ENCODE measurements at regions of chr5 and their contacts with region 1.

Region 1: DNA sequence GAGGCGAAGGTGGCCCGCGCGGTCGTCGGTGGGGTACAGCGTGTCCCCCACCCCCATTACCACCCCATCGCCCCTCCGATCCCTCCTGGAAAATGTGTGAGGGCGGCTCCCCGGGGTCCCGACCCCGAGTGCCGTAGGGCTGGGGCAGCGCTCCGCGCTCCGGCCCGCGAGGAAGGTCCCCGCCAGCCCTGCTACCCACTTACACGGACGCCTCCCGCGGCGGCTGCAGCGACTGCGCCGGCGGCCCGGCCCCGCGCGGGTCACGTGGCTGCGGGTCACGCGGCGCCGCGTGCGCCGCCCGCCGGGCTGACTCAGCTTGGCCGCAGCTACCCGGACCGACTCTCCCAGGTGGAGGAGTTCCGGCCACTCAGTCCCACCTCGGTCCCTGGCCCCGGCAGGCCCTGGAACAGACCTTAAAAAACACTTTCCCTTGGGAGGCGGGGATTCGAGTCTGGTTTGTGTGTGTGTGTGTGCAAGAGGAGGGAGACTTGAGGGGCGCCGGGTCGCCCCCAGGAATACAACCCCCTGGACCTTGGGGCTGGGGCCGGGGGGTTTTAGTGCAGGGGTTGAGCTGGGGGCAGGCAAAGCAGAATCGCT is at the start of gene GNPDA1:
- DNase-seq: peak; percentile 29 to 85 (median 61)
- ATAC-seq: peak; percentile 52
- H3K4me3 ChIP-seq: peak within 1 kb of the TSS; percentile 60 to 78
- H3K4me3 Mint-ChIP-seq: peak within 1 kb of the TSS; percentile 83
- H3K27ac ChIP-seq: peak within 1 kb of the TSS; percentile 55 to 72
- H3K27ac Mint-ChIP-seq: peak within 1 kb of the TSS; percentile 90
- H3K4me1 ChIP-seq: peaks cover 59% of the 10 kb centered on the region
- H3K4me1 Mint-ChIP-seq: peaks cover 72% of the 10 kb centered on the region
- H3K27me3 ChIP-seq: no peaks in the 10 kb centered on the region
- H3K27me3 Mint-ChIP-seq: no peaks in the 10 kb centered on the region
- CTCF ChIP-seq: no peak
- total RNA-seq, gene GNPDA1: 5.2 TPM

Region 2: GRCh38 chr5:141681695-141682641 is 330.9 kb before region 1 on chr5 and contains the start of gene ARAP3:
- CTCF ChIA-PET with region 1: no interaction called
- POLR2A ChIA-PET with region 1: no interaction called
- intact Hi-C with region 1: loop called in 1 of 2 experiments (anchors 1 kb)
- DNase-seq: peak in 7 of 9 experiments; percentile 30 to 78 (median 49)
- ATAC-seq: peak; percentile 54
- H3K4me3 ChIP-seq: peak within 1 kb of the TSS; percentile 55 to 56
- H3K4me3 Mint-ChIP-seq: peak within 1 kb of the TSS; percentile 76
- H3K27ac ChIP-seq: peak within 1 kb of the TSS in 1 of 2 experiments; percentile 34
- H3K27ac Mint-ChIP-seq: peak within 1 kb of the TSS; percentile 49
- H3K4me1 ChIP-seq: peaks cover 30% of the 10 kb centered on the region
- H3K4me1 Mint-ChIP-seq: peaks cover 28% of the 10 kb centered on the region
- H3K27me3 ChIP-seq: no peaks in the 10 kb centered on the region
- H3K27me3 Mint-ChIP-seq: no peaks in the 10 kb centered on the region
- CTCF ChIP-seq: no peak
- total RNA-seq, gene ARAP3: 0.73 to 1.2 TPM

Region 3: DNA sequence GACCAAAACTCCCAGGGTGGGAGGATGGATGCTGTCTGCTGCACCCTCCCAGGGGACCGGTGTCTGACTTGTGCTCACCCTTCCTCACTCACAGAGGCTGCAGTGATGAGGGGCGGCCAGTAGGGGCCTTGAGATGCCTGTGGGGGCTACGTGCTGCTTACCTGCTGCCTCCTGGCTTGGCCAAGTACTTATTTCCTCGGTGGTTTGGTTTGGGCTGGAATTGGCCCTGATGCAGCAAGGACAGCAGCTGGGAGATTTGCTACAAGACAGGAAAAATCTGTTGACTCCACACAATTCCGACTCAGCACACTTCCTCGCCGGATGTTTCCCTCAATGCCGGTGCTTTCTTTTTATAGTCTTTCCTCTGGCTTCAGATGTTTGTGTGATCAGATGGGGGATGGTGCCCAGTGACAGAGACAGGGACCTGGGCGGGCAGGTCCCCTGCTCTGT is 61.5 kb before region 1 on chr5:
- CTCF ChIA-PET with region 1: no interaction called
- POLR2A ChIA-PET with region 1: no interaction called
- intact Hi-C with region 1: no loop called
- DNase-seq: peak in 4 of 9 experiments; percentile 34 to 58 (median 44)
- ATAC-seq: peak; percentile 91
- H3K4me3 ChIP-seq: no peak overlapping the region
- H3K4me3 Mint-ChIP-seq: peak overlapping the region; percentile 54
- H3K27ac ChIP-seq: no peak overlapping the region
- H3K27ac Mint-ChIP-seq: no peak overlapping the region
- H3K4me1 ChIP-seq: no peaks in the 10 kb centered on the region
- H3K4me1 Mint-ChIP-seq: peaks cover 11% of the 10 kb centered on the region
- H3K27me3 ChIP-seq: no peaks in the 10 kb centered on the region
- H3K27me3 Mint-ChIP-seq: no peaks in the 10 kb centered on the region
- CTCF ChIP-seq: peak; percentile 49

Region 4: DNA sequence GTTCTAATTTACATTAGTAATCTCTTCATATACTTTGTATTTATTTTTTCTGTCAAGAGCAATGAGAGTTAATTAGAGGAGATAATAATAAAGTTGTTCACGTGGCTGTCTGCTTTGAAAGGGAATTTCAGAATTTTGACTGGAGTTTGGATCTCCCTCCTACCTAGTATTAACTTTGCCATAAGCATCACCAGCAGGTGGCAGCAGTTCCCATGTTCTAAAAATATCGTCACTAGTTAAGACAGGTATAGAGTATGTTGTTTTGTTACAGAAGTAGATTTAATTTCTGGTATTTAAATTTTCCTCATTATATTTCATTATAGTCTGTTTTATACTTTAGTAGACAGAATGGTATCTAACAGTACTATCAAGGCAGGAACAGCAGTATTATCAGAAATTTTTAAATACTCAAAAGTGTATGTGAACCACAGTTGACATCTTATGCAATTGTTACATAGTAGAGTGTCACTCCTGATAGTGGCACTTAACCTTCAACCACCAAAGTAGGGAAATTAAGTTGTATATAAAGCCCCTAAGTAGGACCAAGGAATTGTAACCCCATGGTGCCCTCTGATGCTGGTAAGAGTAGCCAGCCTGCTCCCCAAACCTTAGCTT is 20.4 kb before region 1 on chr5:
- CTCF ChIA-PET with region 1: interaction called, 24 read pairs
- POLR2A ChIA-PET with region 1: interaction called, 3 read pairs
- intact Hi-C with region 1: loop called in 1 of 2 experiments (anchors 1 kb)
- DNase-seq: peak; percentile 59 to 87 (median 81)
- ATAC-seq: peak; percentile 87
- H3K4me3 ChIP-seq: no peak overlapping the region
- H3K4me3 Mint-ChIP-seq: no peak overlapping the region
- H3K27ac ChIP-seq: no peak overlapping the region
- H3K27ac Mint-ChIP-seq: no peak overlapping the region
- H3K4me1 ChIP-seq: no peaks in the 10 kb centered on the region
- H3K4me1 Mint-ChIP-seq: peaks cover 5% of the 10 kb centered on the region
- H3K27me3 ChIP-seq: no peaks in the 10 kb centered on the region
- H3K27me3 Mint-ChIP-seq: no peaks in the 10 kb centered on the region
- CTCF ChIP-seq: peak; percentile 97

Region 5: GRCh38 chr5:142024771-142025304 is 11.9 kb after region 1 on chr5:
- CTCF ChIA-PET with region 1: interaction called, 18 read pairs
- POLR2A ChIA-PET with region 1: interaction called, 10 read pairs
- intact Hi-C with region 1: loop called in 1 of 2 experiments (anchors 1 kb)
- DNase-seq: peak; percentile 67 to 90 (median 84)
- ATAC-seq: peak; percentile 100
- H3K4me3 ChIP-seq: peak overlapping the region; percentile 43 to 51
- H3K4me3 Mint-ChIP-seq: peak overlapping the region; percentile 90
- H3K27ac ChIP-seq: peak overlapping the region; percentile 67 to 76
- H3K27ac Mint-ChIP-seq: peak overlapping the region; percentile 99
- H3K4me1 ChIP-seq: peaks cover 11% of the 10 kb centered on the region
- H3K4me1 Mint-ChIP-seq: peaks cover 16% of the 10 kb centered on the region
- H3K27me3 ChIP-seq: no peaks in the 10 kb centered on the region
- H3K27me3 Mint-ChIP-seq: no peaks in the 10 kb centered on the region
- CTCF ChIP-seq: no peak

Region 6: GRCh38 chr5:142063878-142064331 is 51.0 kb after region 1 on chr5:
- CTCF ChIA-PET with region 1: interaction called, 6 read pairs
- POLR2A ChIA-PET with region 1: interaction called, 3 read pairs
- intact Hi-C with region 1: loop called in 1 of 2 experiments (anchors 5 kb)
- DNase-seq: peak in 8 of 9 experiments; percentile 11 to 66 (median 40)
- ATAC-seq: peak; percentile 73
- H3K4me3 ChIP-seq: peak overlapping the region in 1 of 2 experiments; percentile 1
- H3K4me3 Mint-ChIP-seq: peak overlapping the region; percentile 49
- H3K27ac ChIP-seq: no peak overlapping the region
- H3K27ac Mint-ChIP-seq: peak overlapping the region; percentile 63
- H3K4me1 ChIP-seq: peaks cover 13% of the 10 kb centered on the region
- H3K4me1 Mint-ChIP-seq: peaks cover 16% of the 10 kb centered on the region
- H3K27me3 ChIP-seq: no peaks in the 10 kb centered on the region
- H3K27me3 Mint-ChIP-seq: no peaks in the 10 kb centered on the region
- CTCF ChIP-seq: no peak

Region 7: DNA sequence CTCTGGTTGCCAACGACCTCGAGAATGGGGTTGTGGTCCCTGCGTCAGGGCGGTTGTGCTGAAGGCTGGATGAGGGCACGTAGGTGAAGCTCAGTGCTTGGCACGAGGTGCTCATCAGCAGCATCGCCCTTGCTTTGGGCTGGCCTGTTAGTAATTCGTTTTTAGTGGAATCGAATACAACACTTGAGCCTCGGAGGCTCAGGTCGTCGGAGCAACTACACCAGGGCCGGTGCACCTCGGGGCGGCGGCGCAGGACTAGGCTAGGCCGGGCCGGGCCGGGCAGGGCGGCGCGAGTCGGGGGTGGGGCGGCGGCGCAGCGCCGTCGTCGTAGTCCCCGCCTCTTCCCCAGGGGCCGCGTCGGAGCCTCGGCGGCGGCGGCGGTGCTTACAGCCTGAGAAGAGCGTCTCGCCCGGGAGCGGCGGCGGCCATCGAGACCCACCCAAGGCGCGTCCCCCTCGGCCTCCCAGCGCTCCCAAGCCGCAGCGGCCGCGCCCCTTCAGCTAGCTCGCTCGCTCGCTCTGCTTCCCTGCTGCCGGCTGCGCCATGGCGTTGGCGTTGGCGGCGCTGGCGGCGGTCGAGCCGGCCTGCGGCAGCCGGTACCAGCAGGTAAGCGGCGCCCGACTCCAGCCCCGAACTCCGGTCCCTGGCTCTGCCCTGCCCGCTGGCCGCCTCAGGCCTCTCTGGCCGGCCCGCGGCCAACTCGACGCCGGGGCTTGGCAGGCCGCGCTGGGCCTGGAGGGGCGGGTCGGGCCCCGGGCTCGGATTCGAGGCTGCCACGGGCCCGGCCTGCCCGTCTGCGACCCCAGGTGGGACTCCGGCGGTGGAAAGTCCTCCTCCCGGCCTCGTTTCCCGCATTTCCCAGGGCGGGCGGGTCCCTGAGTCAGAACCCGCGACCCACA is 95.8 kb after region 1 on chr5 and contains the start of gene NDFIP1:
- CTCF ChIA-PET with region 1: interaction called, 49 read pairs
- POLR2A ChIA-PET with region 1: interaction called, 23 read pairs
- intact Hi-C with region 1: loop called (anchors 1 to 2 kb)
- DNase-seq: peak; percentile 71 to 93 (median 86)
- ATAC-seq: peak; percentile 73
- H3K4me3 ChIP-seq: peak within 1 kb of the TSS; percentile 71 to 85
- H3K4me3 Mint-ChIP-seq: peak within 1 kb of the TSS; percentile 99
- H3K27ac ChIP-seq: peak within 1 kb of the TSS; percentile 93 to 95
- H3K27ac Mint-ChIP-seq: peak within 1 kb of the TSS; percentile 99
- H3K4me1 ChIP-seq: peaks cover 74% of the 10 kb centered on the region
- H3K4me1 Mint-ChIP-seq: peaks cover 70% of the 10 kb centered on the region
- H3K27me3 ChIP-seq: no peaks in the 10 kb centered on the region
- H3K27me3 Mint-ChIP-seq: no peaks in the 10 kb centered on the region
- CTCF ChIP-seq: no peak
- total RNA-seq, gene NDFIP1: 156 to 167 TPM

Region 8: GRCh38 chr5:142186857-142187594 is 174.1 kb after region 1 on chr5:
- CTCF ChIA-PET with region 1: no interaction called
- POLR2A ChIA-PET with region 1: no interaction called
- intact Hi-C with region 1: no loop called
- DNase-seq: peak in 3 of 9 experiments; percentile 23 to 51 (median 32)
- ATAC-seq: no peak
- H3K4me3 ChIP-seq: no peak overlapping the region
- H3K4me3 Mint-ChIP-seq: no peak overlapping the region
- H3K27ac ChIP-seq: peak overlapping the region in 1 of 2 experiments; percentile 19
- H3K27ac Mint-ChIP-seq: no peak overlapping the region
- H3K4me1 ChIP-seq: no peaks in the 10 kb centered on the region
- H3K4me1 Mint-ChIP-seq: peaks cover 4% of the 10 kb centered on the region
- H3K27me3 ChIP-seq: no peaks in the 10 kb centered on the region
- H3K27me3 Mint-ChIP-seq: peaks cover 4% of the 10 kb centered on the region
- CTCF ChIP-seq: no peak

Region 9: DNA sequence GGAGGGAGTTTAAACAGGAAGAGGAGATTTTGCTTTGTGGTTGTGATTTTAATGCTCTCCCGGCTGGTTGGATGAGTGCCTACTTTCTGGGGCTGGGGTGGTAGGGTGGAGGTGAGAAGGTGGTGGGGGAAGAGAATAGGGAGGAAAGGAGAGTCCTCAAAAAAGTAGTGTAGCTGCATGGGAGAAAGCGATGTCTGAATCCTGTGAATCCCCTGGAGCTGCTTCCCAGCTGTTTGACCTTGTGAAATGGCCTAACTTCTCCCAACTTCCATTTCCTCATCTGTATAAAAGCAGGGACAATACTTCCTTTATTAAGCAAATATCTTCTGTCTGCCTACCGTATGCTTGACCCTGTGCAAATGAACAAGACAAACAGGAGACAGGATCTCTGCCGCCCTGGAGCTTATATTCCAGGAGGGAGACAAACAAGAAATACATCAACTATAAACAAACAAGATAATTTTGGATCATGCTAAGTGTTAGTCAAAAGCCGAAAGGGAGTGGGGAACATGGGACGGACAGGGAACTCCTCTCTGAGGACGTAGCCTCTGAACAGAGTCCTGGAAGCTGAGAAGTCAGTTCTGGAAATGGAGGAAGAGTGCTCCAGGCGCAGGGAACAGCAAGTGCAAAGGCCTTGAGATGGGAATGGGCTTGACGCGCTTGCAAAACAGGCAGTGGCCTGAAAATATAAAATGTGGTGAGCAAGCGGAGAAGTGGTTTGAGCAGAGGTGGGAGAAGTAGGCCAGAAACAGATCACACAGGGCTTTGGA is 208.4 kb after region 1 on chr5:
- CTCF ChIA-PET with region 1: no interaction called
- POLR2A ChIA-PET with region 1: interaction called, 3 read pairs
- intact Hi-C with region 1: loop called (anchors 5 kb)
- DNase-seq: no peak
- ATAC-seq: no peak
- H3K4me3 ChIP-seq: no peak overlapping the region
- H3K4me3 Mint-ChIP-seq: no peak overlapping the region
- H3K27ac ChIP-seq: no peak overlapping the region
- H3K27ac Mint-ChIP-seq: peak overlapping the region; percentile 18
- H3K4me1 ChIP-seq: peaks cover 27% of the 10 kb centered on the region
- H3K4me1 Mint-ChIP-seq: peaks cover 42% of the 10 kb centered on the region
- H3K27me3 ChIP-seq: peaks cover 0 to 2% of the 10 kb centered on the region in 2 experiments
- H3K27me3 Mint-ChIP-seq: peaks cover 16% of the 10 kb centered on the region
- CTCF ChIP-seq: no peak

Region 10: DNA sequence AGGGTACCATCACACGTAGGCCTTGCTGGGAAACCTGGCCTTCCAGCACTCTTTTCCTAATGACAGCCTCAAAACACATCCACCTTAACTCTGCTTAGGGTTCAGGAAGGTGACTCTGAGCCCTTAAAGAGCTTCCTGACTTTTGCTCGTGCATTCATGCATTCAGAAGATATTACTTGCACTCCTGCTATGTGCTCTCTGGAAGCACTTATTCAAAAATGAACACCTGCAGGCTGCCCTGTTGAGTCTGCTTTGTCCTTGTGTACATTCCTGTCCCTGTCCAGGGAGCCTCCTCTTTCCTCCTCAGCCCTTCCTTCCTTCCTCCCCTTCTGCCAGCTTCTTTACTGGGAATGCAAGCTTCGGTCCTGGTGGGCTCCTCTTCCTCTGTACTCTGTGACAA is 250.5 kb after region 1 on chr5:
- CTCF ChIA-PET with region 1: no interaction called
- POLR2A ChIA-PET with region 1: no interaction called
- intact Hi-C with region 1: no loop called
- DNase-seq: no peak
- ATAC-seq: no peak
- H3K4me3 ChIP-seq: no peak overlapping the region
- H3K4me3 Mint-ChIP-seq: no peak overlapping the region
- H3K27ac ChIP-seq: no peak overlapping the region
- H3K27ac Mint-ChIP-seq: no peak overlapping the region
- H3K4me1 ChIP-seq: no peaks in the 10 kb centered on the region
- H3K4me1 Mint-ChIP-seq: no peaks in the 10 kb centered on the region
- H3K27me3 ChIP-seq: no peaks in the 10 kb centered on the region
- H3K27me3 Mint-ChIP-seq: peaks cover 3% of the 10 kb centered on the region
- CTCF ChIP-seq: no peak

Measured in CD8-positive, alpha-beta T cell (primary cell).